ENCODE measurements at regions of chr7 and their contacts with region 1.

Region 1: GRCh38 chr7:108181073-108181985 is 51.2 kb upstream of the LAMB4 start:
- DNase-seq: peak in 6 of 9 donors; percentile 16 to 64 (median 46)
- ATAC-seq: peak; percentile 74
- H3K4me3 ChIP-seq: no peak overlapping the region
- H3K4me3 Mint-ChIP-seq: no peak overlapping the region
- H3K27ac ChIP-seq: no peak overlapping the region
- H3K27ac Mint-ChIP-seq: no peak overlapping the region
- H3K4me1 ChIP-seq: no peaks in the 10 kb centered on the region
- H3K4me1 Mint-ChIP-seq: no peaks in the 10 kb centered on the region
- H3K27me3 ChIP-seq: no peaks in the 10 kb centered on the region
- H3K27me3 Mint-ChIP-seq: peaks cover 0 to 8% (median 0%) of the 10 kb centered on the region in 5 donors

Region 2: GRCh38 chr7:107274506-107274905 is 906.8 kb before region 1 on chr7:
- CTCF ChIA-PET with region 1: no interaction called
- POLR2A ChIA-PET with region 1: no interaction called
- intact Hi-C with region 1: no loop called
- DNase-seq: no peak
- ATAC-seq: no peak
- H3K4me3 ChIP-seq: no peak overlapping the region
- H3K4me3 Mint-ChIP-seq: no peak overlapping the region
- H3K27ac ChIP-seq: no peak overlapping the region
- H3K27ac Mint-ChIP-seq: no peak overlapping the region
- H3K4me1 ChIP-seq: no peaks in the 10 kb centered on the region
- H3K4me1 Mint-ChIP-seq: no peaks in the 10 kb centered on the region
- H3K27me3 ChIP-seq: no peaks in the 10 kb centered on the region
- H3K27me3 Mint-ChIP-seq: no peaks in the 10 kb centered on the region

Region 3: GRCh38 chr7:107318523-107319160 is 862.7 kb before region 1 on chr7:
- CTCF ChIA-PET with region 1: no interaction called
- POLR2A ChIA-PET with region 1: no interaction called
- intact Hi-C with region 1: no loop called
- DNase-seq: no peak
- ATAC-seq: no peak
- H3K4me3 ChIP-seq: no peak overlapping the region
- H3K4me3 Mint-ChIP-seq: no peak overlapping the region
- H3K27ac ChIP-seq: no peak overlapping the region
- H3K27ac Mint-ChIP-seq: no peak overlapping the region
- H3K4me1 ChIP-seq: no peaks in the 10 kb centered on the region
- H3K4me1 Mint-ChIP-seq: peaks cover 0 to 15% (median 3%) of the 10 kb centered on the region in 7 donors
- H3K27me3 ChIP-seq: no peaks in the 10 kb centered on the region
- H3K27me3 Mint-ChIP-seq: no peaks in the 10 kb centered on the region

Region 4: DNA sequence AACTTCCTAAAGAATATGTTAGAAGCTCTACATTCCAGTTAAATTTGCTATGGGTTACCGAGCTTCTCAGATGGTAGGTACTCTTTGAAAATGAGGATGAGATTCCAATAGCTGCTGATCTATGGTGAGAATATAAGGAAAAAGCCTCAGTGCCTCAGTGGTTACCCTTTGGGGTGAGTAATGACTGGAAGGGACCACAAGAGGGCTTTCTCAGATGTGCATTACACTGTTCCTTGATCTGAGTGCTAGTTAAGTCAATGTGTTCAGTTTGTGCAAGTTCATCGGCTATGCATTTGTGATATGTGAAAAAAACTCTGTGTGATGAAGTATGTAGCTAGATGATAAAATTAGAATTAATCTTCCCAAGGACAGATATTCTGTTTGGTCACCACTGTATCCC is 271.4 kb after region 1 on chr7:
- CTCF ChIA-PET with region 1: interaction called, 6 read pairs
- POLR2A ChIA-PET with region 1: no interaction called
- intact Hi-C with region 1: loop called in 1 of 2 experiments (anchors 1 kb)
- DNase-seq: peak in 6 of 9 donors; percentile 24 to 58 (median 41)
- ATAC-seq: peak; percentile 69
- H3K4me3 ChIP-seq: no peak overlapping the region
- H3K4me3 Mint-ChIP-seq: peak overlapping the region in 5 of 10 donors; percentile 7 to 64 (median 47)
- H3K27ac ChIP-seq: no peak overlapping the region
- H3K27ac Mint-ChIP-seq: no peak overlapping the region
- H3K4me1 ChIP-seq: no peaks in the 10 kb centered on the region
- H3K4me1 Mint-ChIP-seq: peaks cover 5 to 30% (median 22%) of the 10 kb centered on the region in 7 donors
- H3K27me3 ChIP-seq: no peaks in the 10 kb centered on the region
- H3K27me3 Mint-ChIP-seq: peaks cover 17 to 69% (median 50%) of the 10 kb centered on the region in 5 donors

Region 5: GRCh38 chr7:108497082-108497725 is 315.9 kb after region 1 on chr7:
- CTCF ChIA-PET with region 1: interaction called, 19 read pairs
- POLR2A ChIA-PET with region 1: interaction called, 5 read pairs
- intact Hi-C with region 1: loop called (anchors 1 kb)
- DNase-seq: peak in 8 of 9 donors; percentile 21 to 59 (median 55)
- ATAC-seq: peak; percentile 88
- H3K4me3 ChIP-seq: no peak overlapping the region
- H3K4me3 Mint-ChIP-seq: no peak overlapping the region
- H3K27ac ChIP-seq: no peak overlapping the region
- H3K27ac Mint-ChIP-seq: peak overlapping the region in 2 of 9 donors; percentile 6 to 43
- H3K4me1 ChIP-seq: no peaks in the 10 kb centered on the region
- H3K4me1 Mint-ChIP-seq: peaks cover 0 to 5% (median 0%) of the 10 kb centered on the region in 7 donors
- H3K27me3 ChIP-seq: no peaks in the 10 kb centered on the region
- H3K27me3 Mint-ChIP-seq: no peaks in the 10 kb centered on the region

Region 6: GRCh38 chr7:108613112-108613759 is 431.9 kb after region 1 on chr7:
- CTCF ChIA-PET with region 1: no interaction called
- POLR2A ChIA-PET with region 1: no interaction called
- intact Hi-C with region 1: loop called in 1 of 2 experiments (anchors 2 kb)
- DNase-seq: peak in 6 of 9 donors; percentile 4 to 51 (median 42)
- ATAC-seq: peak; percentile 56
- H3K4me3 ChIP-seq: no peak overlapping the region
- H3K4me3 Mint-ChIP-seq: no peak overlapping the region
- H3K27ac ChIP-seq: no peak overlapping the region
- H3K27ac Mint-ChIP-seq: peak overlapping the region in 1 of 9 donors; percentile 25
- H3K4me1 ChIP-seq: no peaks in the 10 kb centered on the region
- H3K4me1 Mint-ChIP-seq: no peaks in the 10 kb centered on the region
- H3K27me3 ChIP-seq: no peaks in the 10 kb centered on the region
- H3K27me3 Mint-ChIP-seq: peaks cover 0 to 17% (median 0%) of the 10 kb centered on the region in 5 donors

Region 7: DNA sequence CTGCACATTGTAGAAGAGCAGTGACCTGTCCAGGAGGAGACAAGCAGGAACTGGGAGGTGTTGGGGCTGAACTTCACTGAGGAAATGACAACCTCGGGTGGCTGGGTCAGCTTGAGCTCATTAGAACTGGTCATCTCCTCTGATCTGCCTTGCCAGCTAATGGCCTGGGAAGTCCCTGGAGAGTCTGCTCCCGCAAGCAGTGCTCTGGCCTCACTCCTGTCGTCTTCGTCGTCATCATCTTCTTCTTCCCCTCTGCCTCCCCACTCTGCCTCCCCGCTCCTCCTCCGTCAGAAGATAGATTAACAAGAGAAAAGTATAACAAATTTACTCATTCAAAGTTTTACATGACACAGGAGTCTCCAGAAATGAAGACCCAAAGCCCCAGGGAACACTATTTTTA is 813.6 kb after region 1 on chr7:
- CTCF ChIA-PET with region 1: no interaction called
- POLR2A ChIA-PET with region 1: no interaction called
- intact Hi-C with region 1: no loop called
- DNase-seq: no peak
- ATAC-seq: no peak
- H3K4me3 ChIP-seq: no peak overlapping the region
- H3K4me3 Mint-ChIP-seq: no peak overlapping the region
- H3K27ac ChIP-seq: no peak overlapping the region
- H3K27ac Mint-ChIP-seq: peak overlapping the region in 1 of 9 donors; percentile 28
- H3K4me1 ChIP-seq: no peaks in the 10 kb centered on the region
- H3K4me1 Mint-ChIP-seq: no peaks in the 10 kb centered on the region
- H3K27me3 ChIP-seq: no peaks in the 10 kb centered on the region
- H3K27me3 Mint-ChIP-seq: no peaks in the 10 kb centered on the region

Measured in naive thymus-derived CD4-positive, alpha-beta T cell (primary cell).